ENCODE measurements at regions of chr5 and their contacts with region 1.

Region 1: GRCh38 chr5:119452373-119453039 is at the start of gene HSD17B4:
- DNase-seq: peak; percentile 90
- ATAC-seq: peak; percentile 96
- H3K4me3 Mint-ChIP-seq: peak within 1 kb of the TSS; percentile 86
- H3K27ac Mint-ChIP-seq: peak within 1 kb of the TSS; percentile 87
- H3K4me1 Mint-ChIP-seq: peaks cover 16% of the 10 kb centered on the region
- H3K27me3 Mint-ChIP-seq: peaks cover 3% of the 10 kb centered on the region
- total RNA-seq, gene HSD17B4: 92.3 to 113 TPM

Region 2: DNA sequence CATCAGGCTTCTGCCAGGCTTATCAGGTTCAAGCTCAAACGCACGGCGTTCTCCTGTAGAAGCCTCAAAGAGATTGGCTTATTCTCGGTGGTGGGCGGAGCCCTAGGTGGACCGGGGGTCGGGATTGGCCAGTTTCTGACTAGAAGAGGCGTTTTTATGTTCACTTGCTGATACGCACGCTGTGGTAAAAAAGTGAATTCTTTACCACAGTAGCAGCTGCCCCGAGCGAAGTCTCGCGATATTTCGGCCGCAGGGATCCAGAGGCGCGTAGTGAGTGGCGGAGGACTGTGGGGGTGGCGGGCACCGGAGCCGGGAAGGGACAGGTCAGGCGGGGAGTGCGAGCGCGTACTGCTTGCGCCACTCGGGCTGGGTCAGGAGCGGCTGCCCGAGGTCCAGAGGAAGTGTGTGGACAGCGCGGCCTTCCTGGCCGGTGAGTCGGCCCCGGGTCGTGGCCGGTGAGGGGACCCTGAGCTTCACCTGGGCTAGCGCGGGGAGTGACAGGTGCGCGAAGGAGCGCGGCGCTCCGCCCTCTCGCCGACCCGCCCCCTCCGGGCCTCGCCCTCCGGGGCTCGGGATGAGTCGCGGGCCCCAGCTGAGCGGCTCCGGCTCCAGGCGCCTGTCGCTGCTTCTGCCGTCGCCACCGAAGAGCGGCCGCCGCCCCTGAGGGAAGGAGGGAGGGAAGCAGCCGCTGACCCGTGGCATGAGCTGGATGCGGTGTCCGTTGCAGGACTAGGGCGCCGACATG is 381.5 kb before region 1 on chr5 and contains the start of gene DMXL1:
- CTCF ChIA-PET with region 1: no interaction called
- POLR2A ChIA-PET with region 1: no interaction called
- intact Hi-C with region 1: loop called in 1 of 2 experiments (anchors 1 kb)
- DNase-seq: peak; percentile 99
- ATAC-seq: peak; percentile 87
- H3K4me3 Mint-ChIP-seq: peak within 1 kb of the TSS; percentile 92
- H3K27ac Mint-ChIP-seq: peak within 1 kb of the TSS; percentile 96
- H3K4me1 Mint-ChIP-seq: peaks cover 35% of the 10 kb centered on the region
- H3K27me3 Mint-ChIP-seq: no peaks in the 10 kb centered on the region
- total RNA-seq, gene DMXL1: 23.5 to 31.1 TPM

Measured in activated CD4-positive, alpha-beta T cell treated with anti-CD3 and anti-CD28 coated beads for 36 hours (primary cell).